ENCODE measurements at regions of chr5 and their contacts with region 1.

Region 1: DNA sequence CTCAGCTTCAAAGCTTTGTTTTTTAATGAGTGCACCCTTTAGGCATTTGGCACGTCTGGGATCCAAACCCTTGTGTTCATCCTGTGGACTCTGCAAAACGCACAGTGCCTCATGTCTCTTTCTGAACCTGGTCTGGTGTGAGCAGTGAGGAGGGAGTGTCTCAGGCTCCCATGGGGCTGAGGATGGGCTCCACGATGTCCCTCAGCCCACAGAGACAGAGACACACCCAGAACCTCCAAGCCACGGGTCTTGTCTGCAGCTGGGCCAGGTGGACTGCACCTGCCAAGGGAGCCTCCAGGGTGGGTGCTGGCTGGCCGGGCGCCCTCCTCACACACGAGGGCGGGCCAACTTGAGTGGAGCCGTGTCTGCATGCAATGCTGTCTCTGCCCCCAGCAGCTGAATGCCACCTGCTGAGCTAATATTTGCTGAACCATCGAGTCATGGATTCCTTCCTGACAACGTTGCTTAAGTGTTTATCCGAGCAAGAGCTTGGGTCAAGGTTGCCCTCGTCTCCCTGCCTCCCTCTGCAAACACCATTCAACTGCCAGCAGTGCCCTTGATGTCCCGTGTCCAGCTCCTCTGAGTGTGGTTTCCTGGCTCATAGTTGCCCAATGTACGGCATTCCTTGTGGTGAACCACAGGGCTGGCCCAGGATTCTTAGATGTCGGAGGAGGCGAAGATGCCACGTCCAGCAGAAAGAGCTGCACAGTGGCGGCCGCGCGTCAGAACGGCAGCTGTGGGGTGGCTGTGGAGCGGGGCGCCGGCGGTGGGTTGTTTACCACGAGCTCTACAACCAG is 31.4 kb upstream of the LPCAT1 start:
- DNase-seq: peak; percentile 78 to 81
- ATAC-seq: peak; percentile 83 to 90
- H3K4me3 ChIP-seq: no peak overlapping the region
- H3K27ac ChIP-seq: peak overlapping the region; percentile 77 to 90
- H3K4me1 ChIP-seq: peaks cover 24% of the 10 kb centered on the region
- CTCF ChIP-seq: no peak
- EP300 ChIP-seq: peak; percentile 79 to 95
- POLR2A ChIP-seq: no peak
- RAD21 ChIP-seq: peak in 1 of 2 experiments; percentile 45; a peak in 2 of 5 replicates

Region 2: GRCh38 chr5:1523771-1524480 is 31.3 kb before region 1 on chr5 and contains the start of gene LPCAT1:
- CTCF ChIA-PET with region 1: interaction called, 4 read pairs
- POLR2A ChIA-PET with region 1: interaction called, 13 read pairs
- DNase-seq: peak; percentile 62 to 70
- ATAC-seq: peak; percentile 75 to 89
- H3K4me3 ChIP-seq: peak within 1 kb of the TSS; percentile 93
- H3K27ac ChIP-seq: peak within 1 kb of the TSS; percentile 93 to 99
- H3K4me1 ChIP-seq: peaks cover 34% of the 10 kb centered on the region
- CTCF ChIP-seq: no peak
- EP300 ChIP-seq: no peak
- POLR2A ChIP-seq: peak; percentile 58
- RAD21 ChIP-seq: no peak; a peak in 1 of 5 replicates
- polyA plus RNA-seq, gene LPCAT1: 22.9 and 24.7 TPM in 2 replicates

Region 3: GRCh38 chr5:1542755-1543154 is 12.5 kb before region 1 on chr5:
- CTCF ChIA-PET with region 1: no interaction called
- POLR2A ChIA-PET with region 1: interaction called, 11 read pairs
- DNase-seq: peak; percentile 74 to 86
- ATAC-seq: peak; percentile 76 to 87
- H3K4me3 ChIP-seq: no peak overlapping the region
- H3K27ac ChIP-seq: peak overlapping the region; percentile 54 to 76
- H3K4me1 ChIP-seq: peaks cover 26% of the 10 kb centered on the region
- CTCF ChIP-seq: no peak
- EP300 ChIP-seq: peak in 1 of 2 experiments; percentile 52; a peak in 1 of 5 replicates
- POLR2A ChIP-seq: no peak
- RAD21 ChIP-seq: no peak